PC-9 (cell line): ENCODE measurements at regions of chr17 and their contacts with region 1.

Region 1: GRCh38 chr17:76166168-76166567 is 25.1 kb upstream of the FOXJ1 start:
- DNase-seq: no peak
- H3K4me3 ChIP-seq: no peak overlapping the region
- H3K27ac ChIP-seq: no peak overlapping the region
- H3K4me1 ChIP-seq: no peaks in the 10 kb centered on the region
- H3K27me3 ChIP-seq: no peaks in the 10 kb centered on the region
- CTCF ChIP-seq: no peak

Region 2: GRCh38 chr17:76132574-76133338 is 33.4 kb before region 1 on chr17:
- CTCF ChIA-PET with region 1: no interaction called
- POLR2A ChIA-PET with region 1: interaction called, 12 read pairs
- intact Hi-C with region 1: no loop called
- DNase-seq: peak; percentile 77 to 98
- H3K4me3 ChIP-seq: no peak overlapping the region
- H3K27ac ChIP-seq: peak overlapping the region; percentile 26; the same call in 1 of the 2 replicates
- H3K4me1 ChIP-seq: peaks cover 28% of the 10 kb centered on the region
- H3K27me3 ChIP-seq: no peaks in the 10 kb centered on the region
- CTCF ChIP-seq: no peak

Region 3: DNA sequence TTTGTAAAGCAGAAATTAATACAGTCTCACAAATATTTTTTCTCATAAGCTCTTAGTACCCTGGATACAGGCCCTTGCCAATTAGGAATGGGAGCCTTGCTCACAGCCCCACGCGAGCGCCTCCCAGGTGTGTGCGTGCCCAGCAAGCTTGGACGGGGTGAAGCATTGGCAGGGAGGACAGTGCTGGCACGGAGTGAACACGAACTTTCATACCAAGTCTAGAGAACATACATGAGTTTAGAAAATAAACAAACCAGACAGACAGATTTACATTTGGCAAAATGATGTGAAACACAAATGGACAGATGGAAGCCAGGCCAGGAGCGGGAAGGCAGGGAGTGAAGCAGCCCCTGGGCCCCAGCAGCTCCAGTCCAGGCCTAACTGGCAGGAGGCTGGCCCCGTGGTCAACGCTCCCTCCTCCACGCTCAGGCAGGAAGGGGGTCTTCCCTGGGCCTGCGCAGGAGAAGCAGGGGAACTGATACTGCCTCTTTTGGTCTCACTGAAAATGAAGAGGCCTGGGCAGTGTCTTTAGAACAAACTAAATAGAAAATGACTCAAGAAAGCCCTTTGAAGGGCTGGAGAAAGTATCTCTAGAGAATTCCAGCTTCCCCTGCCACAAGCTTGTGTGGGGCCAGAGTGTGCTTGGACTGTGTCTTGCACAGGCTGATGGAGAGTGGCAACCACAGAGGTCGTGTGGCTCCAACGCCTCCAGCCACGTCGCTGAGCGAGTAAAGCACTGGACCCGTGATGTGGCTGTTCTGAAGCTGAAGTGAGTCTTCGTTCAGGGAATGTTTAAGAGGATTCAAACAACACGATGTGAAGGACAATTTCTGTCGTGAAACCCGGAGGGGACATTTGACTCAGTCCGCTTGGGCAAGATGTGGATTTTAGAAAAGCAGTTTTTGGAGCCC is 15.2 kb before region 1 on chr17:
- CTCF ChIA-PET with region 1: interaction called, 16 read pairs
- POLR2A ChIA-PET with region 1: no interaction called
- intact Hi-C with region 1: no loop called
- DNase-seq: no peak
- H3K4me3 ChIP-seq: no peak overlapping the region
- H3K27ac ChIP-seq: no peak overlapping the region
- H3K4me1 ChIP-seq: no peaks in the 10 kb centered on the region
- H3K27me3 ChIP-seq: no peaks in the 10 kb centered on the region
- CTCF ChIP-seq: no peak